Activated CD8-positive, alpha-beta memory T cell treated with anti-CD3 and anti-CD28 coated beads, Interleukin-2, amount 10 ng/mL, durations not matched to agents 7 days and 5 days (primary cell): ENCODE measurements at regions of chr7 and their contacts with region 1.

Region 1: GRCh38 chr7:98168181-98168905 is 42.9 kb upstream of the BHLHA15 start:
- DNase-seq: peak; percentile 73
- ATAC-seq: peak; percentile 85
- H3K4me3 Mint-ChIP-seq: no peak overlapping the region
- H3K27ac Mint-ChIP-seq: peak overlapping the region; percentile 14
- H3K4me1 Mint-ChIP-seq: peaks cover 4% of the 10 kb centered on the region
- H3K27me3 Mint-ChIP-seq: no peaks in the 10 kb centered on the region

Region 2: GRCh38 chr7:97430001-97430400 is 738.3 kb before region 1 on chr7:
- CTCF ChIA-PET with region 1: no interaction called
- DNase-seq: no peak
- ATAC-seq: no peak
- H3K4me3 Mint-ChIP-seq: no peak overlapping the region
- H3K27ac Mint-ChIP-seq: no peak overlapping the region
- H3K4me1 Mint-ChIP-seq: no peaks in the 10 kb centered on the region
- H3K27me3 Mint-ChIP-seq: no peaks in the 10 kb centered on the region

Region 3: DNA sequence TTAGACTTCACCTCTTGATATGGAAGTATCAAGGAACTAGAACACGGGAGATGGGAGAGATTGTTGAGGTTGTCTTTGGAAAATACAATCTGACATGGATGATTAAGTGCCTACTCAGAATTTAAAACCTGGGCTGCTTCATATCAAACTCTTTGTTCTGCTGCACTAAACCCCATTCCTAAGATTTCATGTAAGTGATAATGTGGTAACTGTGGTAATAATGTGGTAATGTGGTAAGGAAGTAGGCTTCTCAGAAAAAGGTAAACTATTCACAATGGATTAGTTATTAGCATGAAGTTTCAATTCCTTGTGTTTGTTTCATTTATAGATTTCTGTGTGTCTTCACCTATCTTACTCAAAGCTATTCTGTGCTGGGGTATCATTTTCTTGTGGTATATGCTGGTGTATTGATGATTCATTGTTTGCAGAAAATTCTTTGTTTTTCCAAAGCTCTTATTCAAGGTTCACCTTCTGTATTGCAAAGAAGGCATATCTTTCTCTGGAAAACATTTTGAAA is 566.3 kb before region 1 on chr7:
- CTCF ChIA-PET with region 1: no interaction called
- DNase-seq: no peak
- ATAC-seq: no peak
- H3K4me3 Mint-ChIP-seq: no peak overlapping the region
- H3K27ac Mint-ChIP-seq: no peak overlapping the region
- H3K4me1 Mint-ChIP-seq: peaks cover 3% of the 10 kb centered on the region
- H3K27me3 Mint-ChIP-seq: no peaks in the 10 kb centered on the region

Region 4: DNA sequence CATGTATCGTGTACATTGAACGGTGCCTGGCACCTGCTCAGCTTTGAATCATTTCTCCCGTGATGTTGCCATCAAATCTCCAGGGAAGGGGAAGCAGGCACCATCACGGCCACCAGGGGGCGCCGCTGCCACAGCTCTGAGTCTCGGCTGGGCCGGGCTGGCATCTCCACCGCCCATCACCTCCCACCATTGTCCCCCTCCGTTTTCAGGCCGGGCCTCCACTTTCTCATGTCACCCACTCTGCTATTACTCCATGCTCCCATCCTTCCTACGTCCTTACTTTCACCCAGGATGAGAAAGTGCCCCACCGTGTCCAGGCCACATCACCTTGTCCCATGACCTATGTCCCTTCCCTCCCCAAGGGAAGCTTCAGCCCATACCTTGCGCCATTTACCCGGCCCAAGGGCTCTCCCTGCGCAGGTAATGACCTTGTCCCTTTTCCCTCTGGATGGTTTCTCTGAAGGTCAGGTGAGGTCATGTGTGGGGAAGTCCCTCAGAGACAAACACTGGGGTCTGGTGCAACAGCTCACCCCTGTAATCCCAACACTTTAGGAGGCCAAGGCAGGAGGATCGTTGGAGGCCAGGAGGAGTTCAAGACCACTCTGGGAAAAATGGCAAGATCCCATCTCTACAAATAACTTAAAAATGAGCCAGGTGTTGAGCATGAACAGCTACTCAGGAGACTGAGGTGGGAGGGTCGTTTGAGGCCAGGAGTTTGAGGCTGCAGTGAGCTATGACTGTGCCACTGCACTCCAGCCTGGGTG is 146.6 kb before region 1 on chr7:
- CTCF ChIA-PET with region 1: interaction called, 210 read pairs
- DNase-seq: peak; percentile 79
- ATAC-seq: peak; percentile 91
- H3K4me3 Mint-ChIP-seq: no peak overlapping the region
- H3K27ac Mint-ChIP-seq: no peak overlapping the region
- H3K4me1 Mint-ChIP-seq: peaks cover 6% of the 10 kb centered on the region
- H3K27me3 Mint-ChIP-seq: peaks cover 3% of the 10 kb centered on the region

Region 5: DNA sequence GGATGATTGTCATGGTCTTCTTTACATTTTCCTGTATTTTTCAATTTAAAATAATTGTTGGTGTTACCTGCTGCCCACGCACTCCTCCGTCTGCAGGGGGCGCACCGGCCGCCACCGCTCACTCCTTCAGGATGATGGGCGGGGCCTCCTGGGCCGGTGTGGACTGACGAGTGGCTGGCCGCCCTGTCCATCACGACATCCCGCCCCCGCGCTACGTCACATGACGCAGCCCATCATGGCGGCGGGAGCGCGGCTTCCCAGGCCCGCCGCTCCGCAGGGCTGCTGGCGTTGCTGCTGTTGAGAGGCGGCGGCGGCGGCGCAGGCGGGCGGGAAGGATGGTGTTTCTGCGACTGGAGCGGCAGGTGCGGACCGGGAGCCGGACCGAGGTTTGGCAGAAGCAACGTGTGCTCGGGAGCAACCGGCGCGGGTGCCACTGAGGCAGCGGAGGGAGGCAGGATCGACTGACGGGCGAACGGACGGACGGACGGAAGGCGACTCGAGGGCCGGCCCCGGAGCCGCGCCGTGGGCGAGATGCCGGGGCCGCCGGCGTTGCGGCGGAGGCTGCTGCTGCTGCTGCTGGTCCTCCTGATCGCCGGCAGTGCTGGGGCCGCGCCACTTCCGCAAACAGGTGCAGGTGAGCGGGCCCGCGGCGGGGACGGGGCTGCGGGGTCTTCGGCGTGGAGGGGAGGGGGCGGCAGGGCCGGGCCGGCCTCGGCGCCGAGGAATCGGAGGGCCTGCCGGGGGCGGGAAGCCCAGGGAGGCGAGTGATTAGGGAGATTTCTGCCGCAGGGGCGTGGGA is 61.5 kb before region 1 on chr7 and contains the start of gene LMTK2:
- CTCF ChIA-PET with region 1: interaction called, 50 read pairs
- DNase-seq: peak; percentile 95
- ATAC-seq: peak; percentile 100
- H3K4me3 Mint-ChIP-seq: peak within 1 kb of the TSS; percentile 93
- H3K27ac Mint-ChIP-seq: peak within 1 kb of the TSS; percentile 86
- H3K4me1 Mint-ChIP-seq: peaks cover 17% of the 10 kb centered on the region
- H3K27me3 Mint-ChIP-seq: peaks cover 3% of the 10 kb centered on the region
- total RNA-seq, gene LMTK2: 8.5 to 9.6 TPM

Region 6: DNA sequence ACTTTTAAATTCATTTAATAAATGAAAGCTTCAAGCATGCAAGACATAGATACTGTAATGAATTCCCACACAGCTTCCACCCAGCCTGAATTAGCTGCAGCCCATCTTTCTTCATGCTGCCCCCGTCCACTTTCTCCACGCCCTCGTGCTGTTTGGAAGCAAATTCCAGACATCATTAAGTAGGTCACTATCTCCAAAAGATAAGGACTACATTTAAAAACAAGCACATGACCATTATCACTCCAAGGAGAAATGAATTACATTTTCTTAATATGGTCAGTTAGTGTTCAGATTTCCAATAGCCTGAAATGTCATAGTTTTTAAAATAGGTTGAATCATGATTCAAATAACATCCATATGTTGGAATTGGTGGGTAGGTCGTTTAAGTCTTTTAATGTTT is 37.4 kb before region 1 on chr7:
- CTCF ChIA-PET with region 1: interaction called, 11 read pairs
- DNase-seq: no peak
- ATAC-seq: no peak
- H3K4me3 Mint-ChIP-seq: no peak overlapping the region
- H3K27ac Mint-ChIP-seq: no peak overlapping the region
- H3K4me1 Mint-ChIP-seq: peaks cover 39% of the 10 kb centered on the region
- H3K27me3 Mint-ChIP-seq: peaks cover 22% of the 10 kb centered on the region

Region 7: GRCh38 chr7:98186452-98187137 is 18.3 kb after region 1 on chr7:
- CTCF ChIA-PET with region 1: interaction called, 15 read pairs
- DNase-seq: no peak
- ATAC-seq: no peak
- H3K4me3 Mint-ChIP-seq: no peak overlapping the region
- H3K27ac Mint-ChIP-seq: no peak overlapping the region
- H3K4me1 Mint-ChIP-seq: peaks cover 13% of the 10 kb centered on the region
- H3K27me3 Mint-ChIP-seq: no peaks in the 10 kb centered on the region